Endothelial cell of umbilical vein (primary cell): ENCODE measurements at regions of chr1 and their contacts with region 1.

Region 1: GRCh38 chr1:92994105-92994712 is 32.9 kb upstream of the DIPK1A start:
- DNase-seq: peak; percentile 68
- H3K4me3 ChIP-seq: no peak overlapping the region
- H3K27ac ChIP-seq: no peak overlapping the region
- H3K4me1 ChIP-seq: no peaks in the 10 kb centered on the region
- H3K27me3 ChIP-seq: peaks cover 4 to 11% of the 10 kb centered on the region in 2 experiments
- CTCF ChIP-seq: peak; percentile 64 to 65
- POLR2A ChIP-seq: no peak

Region 2: GRCh38 chr1:92774407-92774806 is 219.8 kb before region 1 on chr1:
- CTCF ChIA-PET with region 1: no interaction called
- POLR2A ChIA-PET with region 1: no interaction called
- dilution Hi-C with region 1: no loop called
- intact Hi-C with region 1: no loop called
- DNase-seq: no peak
- H3K4me3 ChIP-seq: no peak overlapping the region
- H3K27ac ChIP-seq: no peak overlapping the region
- H3K4me1 ChIP-seq: no peaks in the 10 kb centered on the region
- H3K27me3 ChIP-seq: no peaks in the 10 kb centered on the region
- CTCF ChIP-seq: no peak
- POLR2A ChIP-seq: no peak

Region 3: GRCh38 chr1:92858564-92859399 is 135.4 kb before region 1 on chr1:
- CTCF ChIA-PET with region 1: interaction called, 257 read pairs
- POLR2A ChIA-PET with region 1: no interaction called
- dilution Hi-C with region 1: no loop called
- intact Hi-C with region 1: loop called (anchors 1 kb)
- DNase-seq: peak; percentile 81
- H3K4me3 ChIP-seq: no peak overlapping the region
- H3K27ac ChIP-seq: no peak overlapping the region
- H3K4me1 ChIP-seq: no peaks in the 10 kb centered on the region
- H3K27me3 ChIP-seq: peaks cover 2 to 6% of the 10 kb centered on the region in 2 experiments
- CTCF ChIP-seq: peak; percentile 66 to 93
- POLR2A ChIP-seq: no peak

Region 4: DNA sequence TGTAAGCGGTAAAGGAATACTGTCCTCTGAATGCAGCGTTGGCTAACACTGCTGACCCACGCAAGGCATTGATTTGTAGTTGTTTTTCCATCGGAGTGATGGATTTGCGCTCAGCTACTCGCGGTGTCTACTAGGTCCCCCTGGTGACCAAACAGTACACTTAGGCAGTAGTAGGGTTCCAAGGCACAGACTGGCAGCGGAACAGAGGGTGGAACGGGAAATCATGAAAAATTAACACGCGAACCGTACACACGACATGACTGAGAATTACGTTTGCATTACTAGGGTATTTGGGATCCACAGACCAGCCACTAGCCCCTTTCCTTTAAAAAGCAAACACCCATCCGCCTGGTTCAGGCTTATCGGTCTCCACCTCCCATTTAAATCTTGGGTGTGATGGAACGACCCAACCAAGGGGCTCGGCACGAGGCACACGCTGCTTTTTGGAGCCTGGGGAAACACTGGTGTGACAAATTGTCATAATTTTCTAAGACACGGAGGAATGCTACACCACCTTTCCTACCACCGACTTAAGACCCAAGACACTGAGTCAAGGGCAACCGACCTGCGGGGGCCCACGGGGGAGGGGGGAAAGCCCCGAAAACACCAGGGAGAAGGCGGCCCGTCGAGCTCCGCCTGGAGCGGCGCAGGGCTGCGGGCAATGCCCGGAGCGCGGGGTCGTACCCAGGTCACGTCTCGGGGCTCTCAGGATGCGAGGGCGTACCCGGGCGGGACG is 33.6 kb before region 1 on chr1:
- CTCF ChIA-PET with region 1: interaction called, 20 read pairs
- POLR2A ChIA-PET with region 1: no interaction called
- dilution Hi-C with region 1: no loop called
- intact Hi-C with region 1: loop called (anchors 2 kb)
- DNase-seq: peak; percentile 75
- H3K4me3 ChIP-seq: peak overlapping the region; percentile 33 to 81 (median 58)
- H3K27ac ChIP-seq: no peak overlapping the region
- H3K4me1 ChIP-seq: peaks cover 9% of the 10 kb centered on the region
- H3K27me3 ChIP-seq: peaks cover 39 to 51% of the 10 kb centered on the region in 2 experiments
- CTCF ChIP-seq: peak; percentile 39 to 63
- POLR2A ChIP-seq: no peak

Region 5: DNA sequence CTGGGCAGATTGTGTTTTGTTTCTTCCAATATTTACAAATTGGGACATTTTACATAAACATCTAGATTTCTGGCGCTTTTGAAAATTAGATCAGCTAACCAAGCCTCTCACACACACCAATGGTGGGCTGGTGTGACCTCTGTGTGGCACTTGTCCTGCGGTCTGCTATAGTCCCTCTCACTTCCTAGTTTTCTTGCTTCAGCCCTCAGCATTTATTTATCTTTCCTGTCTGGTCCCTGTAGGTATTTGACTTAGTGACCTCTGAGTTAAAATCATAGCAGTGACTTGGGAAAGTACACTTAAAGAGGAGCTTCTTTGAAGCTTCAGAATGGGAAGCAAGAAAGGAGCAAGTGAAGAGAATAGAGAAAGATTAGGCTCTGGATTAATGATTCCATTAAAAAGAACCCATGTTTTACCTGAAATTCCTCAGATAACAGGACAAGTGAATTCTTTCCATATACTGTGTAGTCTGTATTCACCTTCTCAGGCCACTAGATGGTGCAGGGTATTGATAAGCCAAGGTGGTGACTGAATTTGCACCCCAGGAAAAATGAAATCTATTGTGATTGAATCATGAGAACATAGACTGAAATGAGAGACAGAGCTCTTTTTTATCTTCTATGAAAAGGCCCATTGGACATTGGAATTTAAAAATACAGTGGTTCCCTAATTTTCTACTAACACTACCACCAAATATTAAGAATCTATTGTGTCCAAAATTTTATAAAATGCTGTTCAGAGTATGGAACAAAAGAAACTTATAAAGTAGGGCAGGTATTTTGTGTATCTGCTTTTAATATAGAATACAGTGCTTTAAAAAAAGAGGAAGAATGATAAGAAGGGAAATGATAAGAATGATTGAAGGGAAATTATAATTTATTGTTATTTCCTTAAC is 25.8 kb before region 1 on chr1:
- CTCF ChIA-PET with region 1: interaction called, 9 read pairs
- POLR2A ChIA-PET with region 1: no interaction called
- dilution Hi-C with region 1: no loop called
- intact Hi-C with region 1: loop called (anchors 2 kb)
- DNase-seq: peak; percentile 19
- H3K4me3 ChIP-seq: no peak overlapping the region
- H3K27ac ChIP-seq: no peak overlapping the region
- H3K4me1 ChIP-seq: peaks cover 5% of the 10 kb centered on the region
- H3K27me3 ChIP-seq: peaks cover 31 to 50% of the 10 kb centered on the region in 2 experiments
- CTCF ChIP-seq: peak; percentile 22 to 38
- POLR2A ChIP-seq: no peak

Region 6: DNA sequence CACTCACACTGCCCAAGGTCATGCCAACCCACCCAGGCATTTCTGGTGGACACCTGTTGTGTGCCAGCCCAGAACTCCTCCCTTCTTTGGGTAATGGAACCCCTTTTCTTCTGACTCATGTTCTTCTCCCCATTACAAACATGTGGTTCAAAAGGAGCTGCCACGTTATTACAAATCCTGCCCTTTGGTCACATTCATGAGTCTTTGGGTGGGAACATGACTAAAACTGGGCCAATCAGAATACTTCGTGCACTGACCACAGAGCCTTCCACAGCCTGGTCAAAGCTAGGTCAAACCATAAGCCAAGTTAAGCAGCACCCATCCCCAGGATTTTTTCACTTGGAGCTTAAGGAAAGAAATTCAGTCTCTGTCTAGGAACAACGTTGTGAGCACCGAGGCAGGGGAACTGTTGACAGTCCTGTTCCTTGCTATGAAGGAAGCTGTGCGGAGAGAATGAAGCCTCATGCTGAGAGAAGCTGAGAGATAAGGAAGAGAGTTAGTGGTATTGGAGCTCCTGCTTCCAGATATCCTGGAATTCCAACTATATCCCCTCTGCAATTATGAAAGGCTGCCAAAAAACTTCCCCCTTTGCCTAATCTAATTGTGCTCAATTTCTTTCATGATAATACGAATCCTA is 13.8 kb after region 1 on chr1:
- CTCF ChIA-PET with region 1: interaction called, 31 read pairs
- POLR2A ChIA-PET with region 1: no interaction called
- dilution Hi-C with region 1: no loop called
- intact Hi-C with region 1: no loop called
- DNase-seq: no peak
- H3K4me3 ChIP-seq: no peak overlapping the region
- H3K27ac ChIP-seq: no peak overlapping the region
- H3K4me1 ChIP-seq: no peaks in the 10 kb centered on the region
- H3K27me3 ChIP-seq: peaks cover 5 to 6% of the 10 kb centered on the region in 2 experiments
- CTCF ChIP-seq: no peak
- POLR2A ChIP-seq: no peak

Region 7: DNA sequence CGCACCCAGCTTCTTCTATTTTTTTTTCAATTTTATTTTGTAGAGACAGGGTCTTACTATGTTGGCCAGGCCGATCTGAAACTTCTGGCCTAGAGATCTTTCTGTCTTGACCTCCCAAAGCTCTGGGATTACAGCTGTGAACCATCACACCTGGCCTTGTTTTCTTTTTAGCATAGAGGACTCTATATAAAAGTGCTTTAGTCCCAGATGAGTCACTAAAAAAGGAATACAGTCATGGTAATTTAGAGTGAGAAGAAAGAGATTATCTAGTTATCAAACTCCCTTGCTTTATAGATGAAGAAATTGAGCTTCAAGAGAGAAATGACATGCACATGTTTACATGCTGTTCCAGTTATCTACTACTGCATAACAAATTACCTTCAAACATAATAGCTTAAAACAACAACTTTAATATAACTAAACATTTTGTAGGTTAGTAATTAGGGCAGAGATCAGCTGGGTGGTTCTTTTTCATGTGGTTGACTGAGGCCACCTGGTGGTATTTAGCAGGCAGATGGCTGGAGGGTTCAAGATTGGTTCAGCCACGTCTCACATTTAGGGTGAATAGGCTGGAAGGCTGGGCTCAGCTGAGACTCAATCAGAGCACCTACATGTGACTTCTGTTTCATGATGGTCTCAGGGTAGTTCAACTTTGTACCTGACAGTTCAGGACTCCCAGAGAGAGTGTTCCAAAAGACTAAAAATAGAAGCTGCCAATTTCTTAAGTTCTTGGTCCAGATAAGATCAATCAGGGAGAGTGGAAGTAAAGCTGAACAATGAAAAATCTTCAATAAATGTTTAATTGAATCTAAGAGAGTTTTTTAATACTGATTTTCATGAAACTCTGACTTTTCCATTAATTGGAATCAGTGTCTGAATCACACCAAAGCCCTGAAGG is 67.9 kb after region 1 on chr1:
- CTCF ChIA-PET with region 1: interaction called, 13 read pairs
- POLR2A ChIA-PET with region 1: no interaction called
- dilution Hi-C with region 1: no loop called
- intact Hi-C with region 1: loop called (anchors 2 kb)
- DNase-seq: peak; percentile 29
- H3K4me3 ChIP-seq: no peak overlapping the region
- H3K27ac ChIP-seq: no peak overlapping the region
- H3K4me1 ChIP-seq: no peaks in the 10 kb centered on the region
- H3K27me3 ChIP-seq: peaks cover 4 to 14% of the 10 kb centered on the region in 2 experiments
- CTCF ChIP-seq: peak; percentile 39 to 42
- POLR2A ChIP-seq: no peak

Region 8: DNA sequence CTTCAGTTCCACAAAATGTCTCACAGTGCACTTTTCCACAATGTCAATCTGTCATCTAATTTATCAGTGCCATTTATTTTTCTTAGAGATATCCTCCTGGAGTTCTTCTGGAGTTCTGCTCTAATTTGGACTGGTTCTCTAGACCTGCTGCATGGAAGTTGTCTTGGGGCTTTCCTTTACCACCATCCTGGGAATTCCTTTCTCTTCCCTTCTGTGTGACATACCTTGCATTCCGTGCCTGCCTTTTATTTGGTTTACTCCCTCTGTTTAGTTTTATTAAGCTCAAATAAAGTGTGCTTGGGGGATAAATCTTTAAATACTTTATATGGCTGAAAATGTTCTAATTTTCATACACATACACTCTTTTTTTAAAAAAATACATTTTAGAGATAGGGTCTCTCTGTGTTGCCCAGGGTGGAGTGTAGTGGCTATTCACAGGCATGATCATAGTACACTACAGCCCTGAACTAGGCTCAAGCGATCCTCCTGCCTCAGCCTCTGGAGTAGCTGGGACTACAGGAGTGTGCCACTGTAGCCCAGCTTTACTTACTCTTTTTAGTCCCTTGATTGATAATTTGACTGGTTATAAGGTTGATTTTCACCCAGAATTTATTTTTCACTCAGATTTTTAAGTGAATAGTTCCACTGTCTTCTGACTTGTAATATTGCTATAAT is 99.3 kb after region 1 on chr1:
- CTCF ChIA-PET with region 1: no interaction called
- POLR2A ChIA-PET with region 1: no interaction called
- dilution Hi-C with region 1: no loop called
- intact Hi-C with region 1: no loop called
- DNase-seq: no peak
- H3K4me3 ChIP-seq: no peak overlapping the region
- H3K27ac ChIP-seq: no peak overlapping the region
- H3K4me1 ChIP-seq: no peaks in the 10 kb centered on the region
- H3K27me3 ChIP-seq: no peaks in the 10 kb centered on the region
- CTCF ChIP-seq: no peak
- POLR2A ChIP-seq: no peak